ENCODE measurements at regions of chr11 and their contacts with region 1.

Region 1: DNA sequence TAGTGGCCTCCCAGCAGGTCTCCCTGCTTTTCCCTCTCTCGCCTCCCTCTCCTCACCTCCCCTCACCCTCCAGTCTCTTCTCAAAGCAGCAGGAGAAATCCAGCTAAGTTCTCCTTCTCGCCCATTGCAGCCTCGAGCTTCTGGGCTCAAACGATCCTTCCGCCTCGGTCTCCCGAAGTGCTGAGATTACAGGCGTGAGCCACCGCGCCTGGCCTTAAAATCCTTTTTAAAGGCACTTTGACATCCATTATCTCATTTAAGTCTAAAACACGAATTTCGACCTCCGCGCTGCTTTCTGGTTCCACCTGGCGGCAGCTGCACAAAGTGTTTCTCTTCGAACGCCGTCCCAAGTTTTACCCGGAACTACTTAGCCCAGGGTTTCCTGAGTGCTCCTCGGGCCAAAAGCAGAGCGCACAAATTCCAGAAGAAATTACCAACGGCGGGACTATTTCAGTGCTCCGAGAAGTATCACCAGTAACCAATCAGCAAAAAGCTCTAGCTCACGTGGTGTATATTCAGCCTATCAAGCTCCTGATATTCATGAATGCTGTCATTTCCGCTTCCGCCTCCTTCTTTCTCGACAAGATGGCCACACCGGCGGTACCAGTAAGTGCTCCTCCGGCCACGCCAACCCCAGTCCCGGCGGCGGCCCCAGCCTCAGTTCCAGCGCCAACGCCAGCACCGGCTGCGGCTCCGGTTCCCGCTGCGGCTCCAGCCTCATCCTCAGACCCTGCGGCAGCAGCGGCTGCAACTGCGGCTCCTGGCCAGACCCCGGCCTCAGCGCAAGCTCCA is at the start of gene EIF3F:
- DNase-seq: peak; percentile 72 to 98 (median 91)
- ATAC-seq: peak; percentile 97 to 98 (median 98)
- H3K4me3 ChIP-seq: peak within 1 kb of the TSS; percentile 67 to 70
- H3K4me3 Mint-ChIP-seq: peak within 1 kb of the TSS; percentile 88 to 97 (median 92)
- H3K27ac ChIP-seq: peak within 1 kb of the TSS; percentile 71
- H3K27ac Mint-ChIP-seq: peak within 1 kb of the TSS; percentile 99
- H3K4me1 ChIP-seq: peaks cover 20 to 21% of the 10 kb centered on the region in 2 experiments
- H3K4me1 Mint-ChIP-seq: peaks cover 44 to 54% (median 47%) of the 10 kb centered on the region in 3 donors
- H3K27me3 ChIP-seq: no peaks in the 10 kb centered on the region
- H3K27me3 Mint-ChIP-seq: no peaks in the 10 kb centered on the region
- total RNA-seq, gene EIF3F: 344 to 400 (median 369) TPM

Region 2: GRCh38 chr11:7098235-7098832 is 888.6 kb before region 1 on chr11:
- CTCF ChIA-PET with region 1: interaction called in 1 of 2 experiments, 11 read pairs
- POLR2A ChIA-PET with region 1: no interaction called
- DNase-seq: peak in 2 of 35 experiments; percentile 16 to 72
- ATAC-seq: peak in 3 of 4 experiments; percentile 30 to 55 (median 48)
- H3K4me3 ChIP-seq: no peak overlapping the region
- H3K4me3 Mint-ChIP-seq: no peak overlapping the region
- H3K27ac ChIP-seq: no peak overlapping the region
- H3K27ac Mint-ChIP-seq: no peak overlapping the region
- H3K4me1 ChIP-seq: no peaks in the 10 kb centered on the region
- H3K4me1 Mint-ChIP-seq: no peaks in the 10 kb centered on the region
- H3K27me3 ChIP-seq: peaks cover 0 to 2% of the 10 kb centered on the region in 2 experiments
- H3K27me3 Mint-ChIP-seq: peaks cover 11 to 16% of the 10 kb centered on the region in 2 donors

Region 3: GRCh38 chr11:7892840-7893254 is 94.1 kb before region 1 on chr11:
- CTCF ChIA-PET with region 1: interaction called, 14 to 28 read pairs
- POLR2A ChIA-PET with region 1: interaction called in 1 of 2 experiments, 3 read pairs
- DNase-seq: peak in 5 of 35 experiments; percentile 0 to 56 (median 6)
- ATAC-seq: peak; percentile 55 to 67 (median 59)
- H3K4me3 ChIP-seq: no peak overlapping the region
- H3K4me3 Mint-ChIP-seq: no peak overlapping the region
- H3K27ac ChIP-seq: no peak overlapping the region
- H3K27ac Mint-ChIP-seq: peak overlapping the region in 1 of 2 donors; percentile 11
- H3K4me1 ChIP-seq: no peaks in the 10 kb centered on the region
- H3K4me1 Mint-ChIP-seq: peaks cover 0 to 6% (median 3%) of the 10 kb centered on the region in 3 donors
- H3K27me3 ChIP-seq: peaks cover 2 to 5% of the 10 kb centered on the region in 2 experiments
- H3K27me3 Mint-ChIP-seq: peaks cover 3% of the 10 kb centered on the region in 2 donors

Measured in T-cell (primary cell).